ENCODE measurements at regions of chr18 and their contacts with region 1.

Region 1: DNA sequence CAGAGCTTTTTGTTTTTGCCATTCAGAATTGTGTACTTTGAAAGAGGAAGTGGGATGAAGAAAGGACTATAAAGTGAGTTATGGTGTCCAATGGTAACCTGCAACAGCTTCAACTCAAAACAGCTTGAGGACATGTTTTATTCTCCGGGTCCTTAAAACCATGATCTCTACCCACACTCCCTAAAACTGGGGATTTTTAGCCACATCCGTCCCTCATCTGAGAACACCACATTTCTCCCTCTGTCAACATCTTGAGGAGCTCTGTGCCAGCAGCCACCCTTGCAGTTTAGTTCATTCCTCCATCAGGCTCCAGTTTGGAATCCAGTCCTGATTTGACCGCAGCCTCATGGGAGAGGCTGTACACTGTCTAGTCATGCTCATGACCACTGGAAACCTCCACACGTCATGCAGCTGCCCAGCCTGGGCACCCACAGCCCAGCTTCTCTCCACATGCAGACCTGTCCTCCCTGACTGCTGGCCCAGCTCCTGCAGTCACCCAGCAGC is 62.6 kb downstream of the C18orf63 start:
- DNase-seq: peak in 7 of 10 donors; percentile 9 to 86 (median 57)
- ATAC-seq: peak; percentile 55 to 71
- H3K4me3 Mint-ChIP-seq: peak overlapping the region; percentile 48 to 89 (median 80)
- H3K27ac Mint-ChIP-seq: peak overlapping the region; percentile 86 to 99 (median 95)
- H3K4me1 Mint-ChIP-seq: peaks cover 35 to 59% (median 57%) of the 10 kb centered on the region in 4 donors
- H3K27me3 Mint-ChIP-seq: no peaks in the 10 kb centered on the region

Region 2: GRCh38 chr18:74183130-74183529 is 195.1 kb before region 1 on chr18:
- POLR2A ChIA-PET with region 1: no interaction called
- DNase-seq: no peak
- ATAC-seq: no peak
- H3K4me3 Mint-ChIP-seq: no peak overlapping the region
- H3K27ac Mint-ChIP-seq: no peak overlapping the region
- H3K4me1 Mint-ChIP-seq: peaks cover 0 to 1% (median 0%) of the 10 kb centered on the region in 4 donors
- H3K27me3 Mint-ChIP-seq: peaks cover 8 to 32% (median 13%) of the 10 kb centered on the region in 5 donors

Region 3: DNA sequence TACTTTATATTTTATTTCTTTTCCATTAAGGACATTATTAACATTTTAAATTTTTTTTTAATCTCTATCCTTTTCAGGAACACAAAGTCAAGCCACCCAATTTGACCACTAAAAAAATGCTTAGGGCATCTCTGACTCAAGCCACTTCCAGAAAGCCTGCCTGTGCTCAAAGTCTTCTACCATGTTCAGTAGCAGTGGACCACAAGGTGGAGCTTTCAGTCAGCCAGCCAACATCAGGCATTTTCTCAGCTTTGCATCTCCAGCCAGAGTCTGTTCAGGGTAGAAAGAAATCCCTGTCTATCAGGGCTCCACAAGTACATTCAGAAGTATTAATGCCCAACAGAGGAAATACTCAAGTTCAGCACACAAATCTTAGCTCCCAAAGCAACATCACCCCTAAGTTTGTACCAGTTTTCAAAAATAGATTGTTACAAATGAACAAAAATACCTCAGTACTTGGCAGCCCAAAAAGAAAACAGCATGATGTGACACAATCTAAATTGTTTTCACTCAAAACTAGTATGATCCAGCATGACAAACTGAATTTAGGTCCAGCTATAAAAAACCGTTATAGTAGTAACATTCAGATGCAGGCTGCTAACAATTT is 25.0 kb before region 1 on chr18:
- POLR2A ChIA-PET with region 1: interaction called, 14 read pairs
- DNase-seq: peak; percentile 27 to 84 (median 64)
- ATAC-seq: peak; percentile 96 to 97
- H3K4me3 Mint-ChIP-seq: no peak overlapping the region
- H3K27ac Mint-ChIP-seq: peak overlapping the region in 5 of 10 donors; percentile 44 to 75 (median 66)
- H3K4me1 Mint-ChIP-seq: peaks cover 2 to 14% (median 11%) of the 10 kb centered on the region in 4 donors
- H3K27me3 Mint-ChIP-seq: peaks cover 0 to 3% (median 0%) of the 10 kb centered on the region in 5 donors

Region 4: DNA sequence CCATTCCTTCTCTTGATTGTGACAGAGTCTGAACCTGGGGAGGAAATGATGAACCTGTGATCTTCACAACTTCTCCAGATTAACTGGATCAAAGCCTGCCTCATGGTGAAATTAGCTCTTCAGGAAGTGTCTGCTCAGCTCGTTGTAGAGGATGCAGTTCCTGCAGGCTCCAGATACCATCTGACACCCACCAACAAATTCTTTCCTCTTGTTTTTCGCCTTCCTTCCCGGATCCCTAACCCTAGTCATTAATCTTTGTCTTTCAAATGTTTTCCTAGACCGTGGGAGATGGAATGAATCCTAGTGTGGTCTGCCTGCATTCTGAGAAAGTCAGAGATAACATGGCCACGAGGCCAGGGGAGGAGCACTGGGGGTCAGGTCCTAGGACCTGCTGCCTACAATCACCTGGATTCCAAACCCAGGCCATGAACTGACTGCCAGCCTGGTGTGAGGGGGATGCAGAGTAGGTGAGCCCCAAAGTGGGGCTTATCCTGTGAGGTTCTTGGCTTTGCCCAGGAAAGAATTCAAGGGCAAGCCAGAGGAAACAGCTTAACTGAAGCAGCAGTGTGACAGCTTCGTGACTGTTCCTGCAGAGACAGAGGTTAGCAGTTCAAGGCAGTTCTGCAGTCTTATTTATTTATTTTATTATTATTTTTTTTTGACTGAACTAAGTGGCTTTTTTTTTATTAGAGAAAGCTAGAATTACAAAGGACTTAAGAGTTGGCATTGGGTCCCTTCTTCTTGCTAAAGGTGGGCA is 11.1 kb after region 1 on chr18:
- POLR2A ChIA-PET with region 1: interaction called, 22 read pairs
- DNase-seq: no peak
- ATAC-seq: peak; percentile 58 to 62
- H3K4me3 Mint-ChIP-seq: peak overlapping the region in 3 of 10 donors; percentile 13 to 59 (median 20)
- H3K27ac Mint-ChIP-seq: peak overlapping the region in 8 of 10 donors; percentile 0 to 73 (median 38)
- H3K4me1 Mint-ChIP-seq: peaks cover 22 to 31% (median 27%) of the 10 kb centered on the region in 4 donors
- H3K27me3 Mint-ChIP-seq: peaks cover 0 to 3% (median 0%) of the 10 kb centered on the region in 5 donors

Region 5: GRCh38 chr18:74410441-74410992 is 32.3 kb after region 1 on chr18:
- POLR2A ChIA-PET with region 1: interaction called, 14 read pairs
- DNase-seq: no peak
- ATAC-seq: no peak
- H3K4me3 Mint-ChIP-seq: peak overlapping the region in 2 of 10 donors; percentile 20 to 39
- H3K27ac Mint-ChIP-seq: peak overlapping the region in 4 of 10 donors; percentile 37 to 84 (median 80)
- H3K4me1 Mint-ChIP-seq: peaks cover 24 to 37% (median 29%) of the 10 kb centered on the region in 4 donors
- H3K27me3 Mint-ChIP-seq: peaks cover 0 to 2% (median 0%) of the 10 kb centered on the region in 5 donors

Region 6: GRCh38 chr18:74495581-74496507 is 117.6 kb after region 1 on chr18 and contains the start of gene CNDP2:
- POLR2A ChIA-PET with region 1: interaction called, 30 read pairs
- DNase-seq: peak; percentile 95 to 99 (median 97)
- ATAC-seq: peak; percentile 63 to 72
- H3K4me3 Mint-ChIP-seq: peak within 1 kb of the TSS; percentile 88 to 98 (median 96)
- H3K27ac Mint-ChIP-seq: peak within 1 kb of the TSS; percentile 96 to 99 (median 98)
- H3K4me1 Mint-ChIP-seq: peaks cover 27 to 56% (median 50%) of the 10 kb centered on the region in 4 donors
- H3K27me3 Mint-ChIP-seq: no peaks in the 10 kb centered on the region
- polyA plus RNA-seq, gene CNDP2: 97.0 to 139 (median 111) TPM

Region 7: DNA sequence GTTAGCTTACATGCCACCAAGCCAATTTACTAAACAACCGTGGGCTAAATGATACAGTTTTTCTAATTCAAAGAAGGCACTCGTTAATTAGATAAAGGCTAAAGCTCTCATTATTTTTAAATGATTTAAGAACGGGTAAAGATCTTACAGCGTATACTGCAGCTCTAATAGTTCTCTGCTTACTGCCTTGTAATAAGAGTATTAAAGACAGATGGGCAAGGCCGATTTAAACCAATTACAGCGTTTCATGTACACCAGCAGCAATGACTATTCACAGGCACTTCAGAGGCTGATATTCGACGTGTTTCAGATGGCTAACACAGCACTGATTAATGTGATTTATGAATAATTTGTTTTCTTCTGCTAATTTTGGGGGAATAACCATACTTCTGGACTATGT is 478.7 kb after region 1 on chr18:
- POLR2A ChIA-PET with region 1: no interaction called
- DNase-seq: no peak
- ATAC-seq: no peak
- H3K4me3 Mint-ChIP-seq: no peak overlapping the region
- H3K27ac Mint-ChIP-seq: no peak overlapping the region
- H3K4me1 Mint-ChIP-seq: peaks cover 0 to 2% (median 0%) of the 10 kb centered on the region in 4 donors
- H3K27me3 Mint-ChIP-seq: no peaks in the 10 kb centered on the region

Measured in naive thymus-derived CD8-positive, alpha-beta T cell (primary cell).